PC-3 (cell line): ENCODE measurements at regions of chr16 and their contacts with region 1.

Region 1: DNA sequence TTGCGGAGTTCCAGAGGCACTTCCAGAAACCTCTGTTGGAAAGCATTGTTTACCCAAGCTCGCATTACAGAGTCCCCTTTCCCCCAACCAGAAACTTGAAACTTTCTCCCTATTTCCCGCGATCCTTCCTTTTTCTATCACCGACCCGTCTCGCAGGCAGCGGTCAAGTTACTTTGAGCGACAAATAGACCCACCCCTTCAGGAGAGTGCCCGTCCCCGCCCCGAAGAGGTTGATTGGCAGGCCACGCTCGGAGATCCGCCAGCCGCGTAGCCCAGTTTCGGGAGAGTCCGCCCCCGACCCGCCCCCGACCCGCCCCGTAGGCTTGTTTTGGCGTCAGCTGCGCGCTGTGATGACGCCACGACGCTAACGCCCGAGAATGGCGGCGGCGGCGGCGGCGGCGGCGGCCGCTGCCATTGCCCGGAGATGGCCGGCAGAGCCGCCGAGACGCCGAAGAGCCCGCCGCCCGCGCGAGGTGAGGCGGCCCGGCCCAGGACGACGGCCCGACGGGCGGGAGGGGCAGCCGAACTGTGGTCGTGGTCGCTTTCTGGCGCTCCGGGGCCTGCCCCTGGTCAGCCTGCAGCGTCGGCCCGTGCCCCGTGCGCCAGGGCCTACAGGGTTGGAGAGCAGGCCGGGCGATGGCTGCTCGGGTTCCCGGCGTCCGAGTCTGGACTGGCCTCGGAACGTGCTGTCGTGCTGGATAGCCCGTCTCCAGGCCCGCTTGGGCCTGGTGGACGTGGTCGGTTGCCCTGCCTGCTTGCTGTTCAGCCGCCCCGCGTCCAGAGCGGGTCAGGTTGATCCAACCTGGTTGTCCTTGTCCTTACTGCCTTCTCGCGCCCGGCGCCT is at the start of gene PSKH1:
- DNase-seq: peak; percentile 92
- ATAC-seq: peak; percentile 98
- H3K4me3 ChIP-seq: peak within 1 kb of the TSS; percentile 92
- H3K27ac ChIP-seq: peak within 1 kb of the TSS; percentile 39; the same call in 1 of the 2 replicates
- H3K4me1 ChIP-seq: peaks cover 13% of the 10 kb centered on the region
- H3K27me3 ChIP-seq: no peaks in the 10 kb centered on the region
- CTCF ChIP-seq: no peak
- total RNA-seq, gene PSKH1: 6.6 and 8.3 TPM in 2 replicates

Region 2: GRCh38 chr16:67767953-67768352 is 125.2 kb before region 1 on chr16:
- CTCF ChIA-PET with region 1: no interaction called
- POLR2A ChIA-PET with region 1: interaction called, 16 read pairs
- intact Hi-C with region 1: no loop called
- DNase-seq: peak; percentile 9
- ATAC-seq: peak; percentile 48; the same call in 1 of the 2 replicates
- H3K4me3 ChIP-seq: no peak overlapping the region
- H3K27ac ChIP-seq: no peak overlapping the region
- H3K4me1 ChIP-seq: no peaks in the 10 kb centered on the region
- H3K27me3 ChIP-seq: no peaks in the 10 kb centered on the region
- CTCF ChIP-seq: no peak

Region 3: DNA sequence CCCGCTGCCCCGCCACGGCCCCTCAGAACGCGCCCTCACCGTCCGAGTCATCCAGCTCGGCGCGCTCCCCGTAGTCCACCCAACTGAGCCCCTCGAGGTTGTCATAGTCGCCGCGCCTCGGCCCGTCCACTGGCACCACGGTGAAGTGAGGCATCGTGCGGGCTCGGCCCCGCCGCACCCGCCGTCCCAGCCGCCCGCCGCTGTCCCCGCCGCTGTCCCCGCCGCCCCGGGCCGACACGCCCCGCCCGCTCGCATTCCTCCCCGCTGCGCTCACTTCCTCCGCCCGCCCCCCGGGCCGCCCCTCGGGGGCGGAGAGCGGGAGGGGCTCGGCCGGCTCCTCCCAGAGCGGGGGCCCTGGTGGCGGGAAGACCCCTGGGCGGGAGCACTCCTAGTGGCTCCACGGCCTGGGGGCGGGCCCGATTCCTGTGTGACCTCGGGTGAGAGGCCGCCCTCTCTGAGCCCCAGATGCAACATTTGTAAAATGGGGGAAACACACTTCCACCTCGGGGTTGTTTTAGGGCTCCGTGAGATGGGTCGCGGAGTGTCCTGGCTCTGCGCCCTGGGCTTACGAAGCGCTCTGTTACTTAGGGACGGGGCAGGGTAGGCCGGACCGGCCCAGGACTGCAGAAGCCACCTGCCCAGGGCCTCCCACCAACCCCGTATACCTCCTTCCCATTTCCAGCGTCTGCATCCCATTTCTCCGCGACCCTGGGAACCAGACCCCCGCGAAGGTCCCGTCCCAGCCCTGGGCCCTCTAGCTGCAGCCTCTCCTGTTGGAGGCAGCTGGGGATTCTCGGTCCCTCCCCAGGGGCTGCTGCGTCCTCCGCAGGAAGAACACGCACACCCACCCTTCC is 75.5 kb after region 1 on chr16 and contains the start of gene SLC12A4:
- CTCF ChIA-PET with region 1: no interaction called
- POLR2A ChIA-PET with region 1: interaction called, 11 read pairs
- intact Hi-C with region 1: no loop called
- DNase-seq: peak; percentile 76
- ATAC-seq: peak; percentile 82
- H3K4me3 ChIP-seq: peak within 1 kb of the TSS; percentile 94
- H3K27ac ChIP-seq: no peak within 1 kb of the TSS
- H3K4me1 ChIP-seq: peaks cover 17% of the 10 kb centered on the region
- H3K27me3 ChIP-seq: no peaks in the 10 kb centered on the region
- CTCF ChIP-seq: no peak
- total RNA-seq, gene SLC12A4: 29.3 and 33.2 TPM in 2 replicates